GM12878 (cell line): ENCODE measurements at regions of chr11 and their contacts with region 1.

Region 1: DNA sequence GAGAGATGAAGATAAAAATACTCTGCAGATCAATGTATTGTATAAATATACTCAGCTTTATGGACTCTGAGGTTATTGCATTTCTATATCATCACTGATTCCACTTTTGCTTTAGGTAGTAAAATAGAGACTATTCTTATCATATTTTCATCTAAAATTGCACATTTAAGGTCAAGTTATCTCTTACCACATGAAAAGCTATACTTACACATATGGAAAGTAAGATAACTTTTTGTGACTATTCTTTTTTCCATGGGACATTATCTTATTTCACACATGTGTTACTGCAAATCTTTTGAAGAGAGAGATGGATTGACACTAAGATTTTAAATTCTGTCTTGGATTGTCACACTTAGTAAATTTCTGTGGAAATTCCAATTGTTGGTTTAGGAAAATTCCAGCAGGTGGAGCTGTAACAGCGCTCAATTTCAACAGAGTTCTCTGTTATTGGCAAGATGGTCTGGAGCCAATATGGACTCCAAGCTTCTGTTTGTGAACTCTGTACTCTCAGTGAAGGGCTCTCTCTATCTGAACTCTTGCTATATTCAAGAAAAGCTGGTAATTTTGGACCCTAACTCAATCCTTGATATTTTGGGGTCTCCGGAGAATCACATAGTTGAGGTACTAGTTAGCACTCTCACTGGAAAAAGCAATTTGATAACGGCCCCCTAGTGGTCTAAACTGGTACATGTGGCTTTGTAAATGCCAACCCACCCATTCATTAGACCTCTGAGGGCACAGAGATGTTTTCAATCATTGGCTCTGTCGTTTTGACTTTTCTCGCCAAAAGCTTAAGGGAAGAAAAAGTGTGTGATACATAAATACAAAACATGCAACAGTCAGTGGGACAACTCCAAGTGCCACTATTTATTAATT is 429.7 kb downstream of the ETS1 start:
- DNase-seq: peak; percentile 51
- ATAC-seq: peak; percentile 94
- H3K4me3 ChIP-seq: no peak overlapping the region
- H3K27ac ChIP-seq: no peak overlapping the region
- H3K4me1 ChIP-seq: no peaks in the 10 kb centered on the region
- H3K27me3 ChIP-seq: peaks cover 2 to 3% of the 10 kb centered on the region in 2 experiments; a peak in 2 of 4 replicates
- CTCF ChIP-seq: peak; percentile 58 to 92 (median 73)
- EP300 ChIP-seq: no peak
- POLR2A ChIP-seq: no peak
- RAD21 ChIP-seq: peak; percentile 61

Region 2: DNA sequence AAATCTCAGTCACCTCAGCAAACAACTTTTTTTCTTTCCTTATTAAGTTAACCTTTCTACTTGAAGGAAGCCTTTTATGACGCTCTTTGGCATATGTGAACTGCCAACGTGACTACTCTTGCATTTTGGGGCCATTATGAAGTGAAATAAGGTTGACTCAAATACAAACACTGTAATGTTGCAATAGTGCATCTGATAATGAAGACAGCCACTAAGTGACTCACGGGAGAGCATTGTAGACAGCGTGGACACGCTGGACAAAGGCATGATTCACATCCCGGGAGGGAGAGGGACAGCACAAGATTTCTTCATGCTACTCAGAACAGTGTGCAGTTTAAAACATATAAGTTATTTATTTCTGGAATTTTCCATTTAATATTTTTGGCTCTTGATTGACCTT is 131.1 kb before region 1 on chr11:
- CTCF ChIA-PET with region 1: interaction called, 33 read pairs
- POLR2A ChIA-PET with region 1: no interaction called
- RAD21 ChIA-PET with region 1: interaction called, 4 read pairs
- SMC1A ChIA-PET with region 1: interaction called, 14 read pairs
- in situ Hi-C with region 1: loop called (anchors 5 kb)
- intact Hi-C with region 1: loop called (anchors 1 kb)
- DNase-seq: no peak
- ATAC-seq: no peak
- H3K4me3 ChIP-seq: no peak overlapping the region
- H3K27ac ChIP-seq: no peak overlapping the region
- H3K4me1 ChIP-seq: no peaks in the 10 kb centered on the region
- H3K27me3 ChIP-seq: no peaks in the 10 kb centered on the region; a peak in 2 of 4 replicates
- CTCF ChIP-seq: no peak
- EP300 ChIP-seq: no peak
- POLR2A ChIP-seq: no peak
- RAD21 ChIP-seq: no peak

Region 3: DNA sequence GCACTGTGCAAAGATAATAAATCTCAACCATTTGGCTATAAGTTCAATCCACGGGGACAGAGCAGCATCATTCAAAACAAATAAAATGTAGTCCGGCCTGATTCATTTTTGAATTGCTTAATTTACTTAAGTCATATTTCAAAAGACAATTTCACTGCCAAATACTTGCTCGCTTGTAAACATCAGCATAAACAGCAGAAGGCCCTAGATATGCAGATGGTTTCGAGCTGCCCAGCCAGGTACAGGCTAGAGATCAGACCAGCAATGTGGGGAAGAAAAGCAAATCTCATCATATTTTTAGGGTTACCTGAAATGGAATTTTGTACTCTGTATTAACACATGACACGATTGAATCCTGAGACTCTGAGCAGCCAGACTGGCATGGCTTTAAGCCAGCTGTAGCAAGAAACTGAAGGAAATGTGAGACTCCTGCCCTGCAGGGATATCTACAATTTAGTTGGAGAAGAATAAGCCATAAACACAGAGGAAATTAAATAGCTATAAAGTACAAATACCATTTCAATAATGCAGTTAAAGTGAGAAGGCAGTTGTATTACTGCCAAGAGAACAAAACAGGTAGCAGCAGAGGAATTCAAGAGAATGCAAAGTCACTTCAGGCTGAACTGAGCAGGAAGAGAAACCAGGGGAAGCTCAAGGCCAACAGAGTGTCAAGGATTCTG is 10.6 kb before region 1 on chr11:
- CTCF ChIA-PET with region 1: interaction called, 15 read pairs
- POLR2A ChIA-PET with region 1: interaction called, 3 read pairs
- RAD21 ChIA-PET with region 1: no interaction called
- SMC1A ChIA-PET with region 1: interaction called, 8 read pairs
- in situ Hi-C with region 1: no loop called
- intact Hi-C with region 1: no loop called
- DNase-seq: no peak
- ATAC-seq: no peak
- H3K4me3 ChIP-seq: no peak overlapping the region
- H3K27ac ChIP-seq: no peak overlapping the region
- H3K4me1 ChIP-seq: no peaks in the 10 kb centered on the region
- H3K27me3 ChIP-seq: peaks cover 0 to 2% of the 10 kb centered on the region in 2 experiments; a peak in 2 of 4 replicates
- CTCF ChIP-seq: no peak
- EP300 ChIP-seq: no peak
- POLR2A ChIP-seq: no peak
- RAD21 ChIP-seq: no peak

Region 4: GRCh38 chr11:128180446-128181087 is 22.9 kb after region 1 on chr11:
- CTCF ChIA-PET with region 1: interaction called, 22 read pairs
- POLR2A ChIA-PET with region 1: no interaction called
- RAD21 ChIA-PET with region 1: no interaction called
- SMC1A ChIA-PET with region 1: interaction called, 5 read pairs
- in situ Hi-C with region 1: no loop called
- intact Hi-C with region 1: no loop called
- DNase-seq: no peak
- ATAC-seq: no peak
- H3K4me3 ChIP-seq: no peak overlapping the region
- H3K27ac ChIP-seq: no peak overlapping the region
- H3K4me1 ChIP-seq: no peaks in the 10 kb centered on the region
- H3K27me3 ChIP-seq: no peaks in the 10 kb centered on the region; a peak in 1 of 4 replicates
- CTCF ChIP-seq: no peak
- EP300 ChIP-seq: no peak
- POLR2A ChIP-seq: no peak
- RAD21 ChIP-seq: no peak

Region 5: GRCh38 chr11:128603752-128604414 is 446.2 kb after region 1 on chr11:
- CTCF ChIA-PET with region 1: interaction called, 13 read pairs
- POLR2A ChIA-PET with region 1: no interaction called
- RAD21 ChIA-PET with region 1: no interaction called
- SMC1A ChIA-PET with region 1: no interaction called
- in situ Hi-C with region 1: no loop called
- intact Hi-C with region 1: no loop called
- DNase-seq: peak; percentile 44
- ATAC-seq: peak; percentile 91
- H3K4me3 ChIP-seq: no peak overlapping the region
- H3K27ac ChIP-seq: no peak overlapping the region
- H3K4me1 ChIP-seq: peaks cover 6% of the 10 kb centered on the region
- H3K27me3 ChIP-seq: no peaks in the 10 kb centered on the region
- CTCF ChIP-seq: peak; percentile 5 to 68 (median 38); a peak in 5 of 6 replicates
- EP300 ChIP-seq: no peak
- POLR2A ChIP-seq: no peak
- RAD21 ChIP-seq: peak; percentile 87

Region 6: GRCh38 chr11:128859563-128860441 is 702.1 kb after region 1 on chr11:
- CTCF ChIA-PET with region 1: interaction called, 26 read pairs
- POLR2A ChIA-PET with region 1: no interaction called
- RAD21 ChIA-PET with region 1: no interaction called
- SMC1A ChIA-PET with region 1: interaction called, 6 read pairs
- in situ Hi-C with region 1: no loop called
- intact Hi-C with region 1: no loop called
- DNase-seq: no peak
- ATAC-seq: peak; percentile 99
- H3K4me3 ChIP-seq: no peak overlapping the region
- H3K27ac ChIP-seq: no peak overlapping the region
- H3K4me1 ChIP-seq: no peaks in the 10 kb centered on the region
- H3K27me3 ChIP-seq: peaks cover 0 to 2% of the 10 kb centered on the region in 2 experiments; a peak in 1 of 4 replicates
- CTCF ChIP-seq: peak; percentile 89 to 94 (median 93); a peak in 5 of 6 replicates
- EP300 ChIP-seq: no peak
- POLR2A ChIP-seq: no peak
- RAD21 ChIP-seq: peak; percentile 71